ENCODE measurements at regions of chr2 and their contacts with region 1.

Region 1: GRCh38 chr2:173210270-173211196 is 134.9 kb downstream of the MAP3K20 start:
- DNase-seq: peak; percentile 62
- CTCF ChIP-seq: peak; percentile 90

Region 2: DNA sequence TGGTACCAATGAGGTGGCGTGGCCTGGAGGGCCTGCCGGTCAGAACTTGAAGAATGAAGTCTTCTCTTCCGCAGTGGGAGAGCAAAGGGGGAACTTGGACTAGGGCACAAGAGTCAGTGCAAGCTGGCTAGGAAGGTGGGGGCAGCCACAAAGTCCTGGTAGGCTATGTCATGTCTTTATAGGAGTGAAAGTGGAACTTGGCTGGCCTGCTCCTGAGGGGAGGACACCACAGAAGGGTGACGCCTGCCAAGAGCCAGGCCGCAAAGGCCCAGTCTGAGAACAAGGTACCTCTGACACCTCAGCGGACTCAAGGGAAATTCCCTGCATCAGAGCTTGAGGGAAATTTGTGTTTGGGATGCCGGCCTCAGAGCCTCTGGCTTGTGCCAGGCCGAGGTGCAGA is 167.1 kb before region 1 on chr2:
- CTCF ChIA-PET with region 1: interaction called, 17 read pairs
- POLR2A ChIA-PET with region 1: no interaction called
- DNase-seq: no peak
- CTCF ChIP-seq: no peak

Region 3: DNA sequence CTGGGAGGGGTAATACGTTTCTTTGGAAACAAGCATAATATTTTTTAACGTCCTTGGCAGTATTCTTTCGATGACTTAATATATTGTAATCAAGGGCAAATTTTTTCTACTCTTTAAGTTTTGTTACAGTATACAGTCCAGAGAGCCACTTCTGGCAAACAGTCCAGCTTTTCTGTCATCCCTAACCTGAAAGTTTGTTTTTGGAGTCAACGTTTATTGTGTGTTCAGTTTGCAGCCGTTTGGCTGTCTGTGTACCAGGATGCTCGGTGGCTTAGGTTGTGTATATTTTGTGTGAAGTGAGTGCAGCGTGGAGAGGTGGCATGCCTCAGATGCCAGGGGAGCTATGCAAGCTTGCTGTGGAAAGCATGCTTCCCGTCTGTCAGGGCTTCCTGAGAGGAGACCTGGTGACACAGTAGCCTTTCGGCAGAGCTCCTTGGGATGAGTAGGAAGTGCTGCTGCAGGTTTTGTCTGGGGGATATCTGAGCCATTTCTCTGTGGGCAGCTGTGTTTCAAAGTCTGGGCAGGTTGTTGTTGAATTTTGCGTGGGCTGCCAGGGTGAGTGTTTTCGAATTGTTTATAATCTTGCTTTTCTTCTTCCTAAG is 120.2 kb before region 1 on chr2:
- CTCF ChIA-PET with region 1: interaction called, 15 read pairs
- POLR2A ChIA-PET with region 1: no interaction called
- DNase-seq: no peak
- CTCF ChIP-seq: no peak

Region 4: DNA sequence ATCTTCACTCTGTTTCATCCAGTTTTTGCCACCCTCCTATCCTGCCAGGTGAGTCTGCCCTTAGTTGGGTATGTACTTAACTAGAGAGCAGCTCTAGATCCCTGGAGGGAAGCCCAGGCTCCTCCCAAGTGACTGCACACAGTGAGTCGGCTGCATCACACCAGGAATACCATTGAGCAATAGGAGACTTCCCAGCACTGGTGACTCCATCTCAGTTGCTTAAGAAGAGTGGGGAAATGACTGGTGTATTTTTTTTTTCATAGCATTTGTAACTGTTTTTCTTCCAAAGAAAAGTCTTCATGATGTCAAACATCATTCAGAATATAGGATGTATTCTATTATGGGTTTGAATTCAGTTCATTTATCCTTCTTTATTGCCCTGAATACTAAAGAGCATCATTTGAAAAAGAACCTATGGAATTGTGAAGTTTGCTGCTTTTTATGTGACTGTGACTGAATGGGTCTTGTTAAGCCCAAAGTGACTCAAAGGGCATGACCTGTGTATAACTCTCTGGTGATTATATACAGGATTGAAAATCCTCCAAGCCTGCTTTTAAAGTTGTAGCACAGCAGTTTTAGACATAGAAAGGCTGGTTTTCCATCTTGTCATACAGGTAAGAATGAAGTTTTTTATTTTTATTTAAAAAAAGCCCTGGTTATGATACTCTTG is 50.6 kb before region 1 on chr2:
- CTCF ChIA-PET with region 1: interaction called, 10 read pairs
- POLR2A ChIA-PET with region 1: no interaction called
- DNase-seq: no peak
- CTCF ChIP-seq: no peak

Region 5: DNA sequence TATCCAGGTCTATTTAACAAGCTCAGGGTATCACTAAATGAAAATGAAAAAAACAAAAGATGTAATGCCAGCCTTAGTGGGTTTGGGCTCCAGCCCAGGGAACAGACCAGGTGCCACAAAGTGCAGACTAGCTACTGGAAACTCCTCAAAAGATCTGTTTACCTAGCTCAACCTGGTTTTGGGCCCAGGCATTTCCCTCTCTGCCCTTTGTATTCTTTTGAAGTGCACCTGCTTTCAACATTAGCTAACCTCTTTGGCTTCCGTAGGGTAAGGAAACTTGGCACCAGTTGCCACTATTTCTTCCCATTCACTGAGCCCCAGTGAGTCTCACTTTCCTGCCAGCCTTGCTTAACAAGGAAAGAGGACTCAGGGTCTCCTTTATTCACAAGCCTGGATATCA is 20.5 kb after region 1 on chr2:
- CTCF ChIA-PET with region 1: interaction called, 15 read pairs
- POLR2A ChIA-PET with region 1: no interaction called
- DNase-seq: no peak
- CTCF ChIP-seq: no peak